ENCODE measurements at regions of chr5 and their contacts with region 1.

Region 1: DNA sequence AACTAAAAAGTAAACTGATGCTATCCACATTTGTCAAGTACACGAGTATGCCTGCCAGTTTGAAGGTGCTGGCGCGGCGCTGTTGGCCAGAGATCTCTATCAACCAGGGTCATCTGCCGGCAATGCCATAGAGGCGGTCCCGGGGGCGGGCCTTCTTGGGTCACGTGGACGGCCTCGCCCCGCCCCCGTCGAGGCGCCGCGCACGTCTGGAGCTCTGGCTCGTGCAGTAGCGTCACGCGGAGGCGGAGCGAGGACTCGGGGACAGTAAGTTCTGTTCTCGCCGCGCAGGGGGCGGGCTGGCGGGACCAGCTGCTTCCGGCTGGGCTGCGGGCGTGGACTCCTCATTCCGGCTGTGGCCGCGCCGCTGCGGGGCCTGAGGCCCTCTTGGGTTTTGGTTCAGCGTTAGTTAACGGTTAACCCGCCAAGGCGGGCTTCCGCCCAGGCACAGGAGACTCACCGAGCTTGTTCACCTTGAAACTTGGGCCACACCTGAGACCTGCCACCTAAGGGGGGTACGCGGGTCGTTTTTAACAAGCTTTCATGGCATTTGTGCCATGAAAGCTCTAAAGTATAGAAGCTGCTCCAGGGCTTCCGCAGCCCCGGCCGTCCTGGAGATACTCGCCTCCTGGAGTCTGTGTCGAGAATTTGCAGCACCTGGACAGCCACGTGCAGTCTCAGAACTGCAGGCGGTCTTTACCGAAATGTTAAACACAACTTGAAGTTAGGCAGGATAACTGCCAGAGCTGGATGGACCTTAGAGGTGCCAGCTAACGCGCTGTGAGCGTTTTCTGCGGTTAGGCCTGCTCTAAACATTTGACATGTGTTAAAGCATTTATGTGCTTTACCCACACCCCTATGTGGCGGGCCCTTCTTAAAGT is at the start of gene RFESD:
- DNase-seq: peak; percentile 97
- ATAC-seq: peak; percentile 96
- H3K4me3 Mint-ChIP-seq: peak within 1 kb of the TSS; percentile 86
- H3K27ac Mint-ChIP-seq: peak within 1 kb of the TSS; percentile 87
- H3K4me1 Mint-ChIP-seq: peaks cover 26% of the 10 kb centered on the region
- H3K27me3 Mint-ChIP-seq: no peaks in the 10 kb centered on the region
- CTCF ChIP-seq: no peak
- total RNA-seq, gene RFESD: 1.8 and 2.4 TPM in 2 replicates

Region 2: GRCh38 chr5:95631991-95632675 is 14.7 kb before region 1 on chr5:
- CTCF ChIA-PET with region 1: interaction called, 6 read pairs
- POLR2A ChIA-PET with region 1: interaction called, 18 read pairs
- intact Hi-C with region 1: loop called (anchors 1 kb)
- DNase-seq: no peak
- ATAC-seq: peak; percentile 97
- H3K4me3 Mint-ChIP-seq: peak overlapping the region; percentile 24
- H3K27ac Mint-ChIP-seq: peak overlapping the region; percentile 92
- H3K4me1 Mint-ChIP-seq: peaks cover 10% of the 10 kb centered on the region
- H3K27me3 Mint-ChIP-seq: peaks cover 1% of the 10 kb centered on the region
- CTCF ChIP-seq: no peak

Region 3: GRCh38 chr5:95760273-95761191 is 113.7 kb after region 1 on chr5:
- CTCF ChIA-PET with region 1: interaction called, 3 read pairs
- POLR2A ChIA-PET with region 1: interaction called, 10 read pairs
- intact Hi-C with region 1: loop called (anchors 1 kb)
- DNase-seq: no peak
- ATAC-seq: peak; percentile 82
- H3K4me3 Mint-ChIP-seq: peak overlapping the region; percentile 74
- H3K27ac Mint-ChIP-seq: peak overlapping the region; percentile 89
- H3K4me1 Mint-ChIP-seq: peaks cover 42% of the 10 kb centered on the region
- H3K27me3 Mint-ChIP-seq: no peaks in the 10 kb centered on the region
- CTCF ChIP-seq: no peak

Region 4: GRCh38 chr5:95770830-95771708 is 124.3 kb after region 1 on chr5:
- CTCF ChIA-PET with region 1: no interaction called
- POLR2A ChIA-PET with region 1: no interaction called
- intact Hi-C with region 1: no loop called
- DNase-seq: no peak
- ATAC-seq: no peak
- H3K4me3 Mint-ChIP-seq: no peak overlapping the region
- H3K27ac Mint-ChIP-seq: no peak overlapping the region
- H3K4me1 Mint-ChIP-seq: no peaks in the 10 kb centered on the region
- H3K27me3 Mint-ChIP-seq: no peaks in the 10 kb centered on the region
- CTCF ChIP-seq: no peak

Region 5: DNA sequence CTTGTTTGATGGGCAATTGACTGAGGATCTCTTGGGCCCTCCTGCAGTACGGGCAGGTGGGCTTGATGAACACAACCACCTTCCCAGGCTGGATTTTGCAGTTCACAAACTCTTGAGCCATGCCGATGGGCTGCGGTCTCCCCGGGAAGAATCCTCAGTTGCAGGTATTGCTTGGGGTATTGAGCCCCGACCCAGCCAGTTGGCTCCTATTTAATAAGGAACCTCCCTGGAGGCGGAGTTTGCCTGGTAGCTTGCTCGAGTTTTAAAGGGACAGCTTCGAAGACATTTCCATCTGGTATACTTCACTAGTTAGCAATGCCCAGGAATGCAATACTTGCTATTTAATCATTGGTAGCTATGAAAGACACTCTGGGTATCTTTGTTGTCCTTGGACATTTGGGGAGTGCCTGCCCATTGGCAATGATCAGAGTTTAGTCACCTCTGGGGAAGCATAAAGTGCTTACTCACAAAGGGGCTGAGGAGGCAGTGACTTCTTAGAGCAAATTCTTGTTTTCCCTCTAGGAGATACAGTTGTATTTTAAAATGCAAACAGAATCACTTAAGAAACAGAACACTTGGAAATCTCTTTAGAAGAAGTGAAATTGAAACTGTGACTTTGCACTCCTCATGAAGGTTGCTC is 175.9 kb after region 1 on chr5 and contains the start of gene GLRX:
- CTCF ChIA-PET with region 1: no interaction called
- POLR2A ChIA-PET with region 1: interaction called, 13 read pairs
- intact Hi-C with region 1: no loop called
- DNase-seq: no peak
- ATAC-seq: peak; percentile 30
- H3K4me3 Mint-ChIP-seq: peak within 1 kb of the TSS; percentile 95
- H3K27ac Mint-ChIP-seq: peak within 1 kb of the TSS; percentile 98
- H3K4me1 Mint-ChIP-seq: peaks cover 72% of the 10 kb centered on the region
- H3K27me3 Mint-ChIP-seq: no peaks in the 10 kb centered on the region
- CTCF ChIP-seq: no peak
- total RNA-seq, gene GLRX: 55.4 and 60.2 TPM in 2 replicates

Region 6: GRCh38 chr5:95961617-95962474 is 315.1 kb after region 1 on chr5 and contains the start of gene ELL2:
- CTCF ChIA-PET with region 1: no interaction called
- POLR2A ChIA-PET with region 1: interaction called, 7 read pairs
- intact Hi-C with region 1: loop called (anchors 1 kb)
- DNase-seq: peak; percentile 92
- ATAC-seq: peak; percentile 84
- H3K4me3 Mint-ChIP-seq: peak within 1 kb of the TSS; percentile 99
- H3K27ac Mint-ChIP-seq: peak within 1 kb of the TSS; percentile 97
- H3K4me1 Mint-ChIP-seq: peaks cover 48% of the 10 kb centered on the region
- H3K27me3 Mint-ChIP-seq: no peaks in the 10 kb centered on the region
- CTCF ChIP-seq: no peak
- total RNA-seq, gene ELL2: 52.9 and 56.0 TPM in 2 replicates

Region 7: DNA sequence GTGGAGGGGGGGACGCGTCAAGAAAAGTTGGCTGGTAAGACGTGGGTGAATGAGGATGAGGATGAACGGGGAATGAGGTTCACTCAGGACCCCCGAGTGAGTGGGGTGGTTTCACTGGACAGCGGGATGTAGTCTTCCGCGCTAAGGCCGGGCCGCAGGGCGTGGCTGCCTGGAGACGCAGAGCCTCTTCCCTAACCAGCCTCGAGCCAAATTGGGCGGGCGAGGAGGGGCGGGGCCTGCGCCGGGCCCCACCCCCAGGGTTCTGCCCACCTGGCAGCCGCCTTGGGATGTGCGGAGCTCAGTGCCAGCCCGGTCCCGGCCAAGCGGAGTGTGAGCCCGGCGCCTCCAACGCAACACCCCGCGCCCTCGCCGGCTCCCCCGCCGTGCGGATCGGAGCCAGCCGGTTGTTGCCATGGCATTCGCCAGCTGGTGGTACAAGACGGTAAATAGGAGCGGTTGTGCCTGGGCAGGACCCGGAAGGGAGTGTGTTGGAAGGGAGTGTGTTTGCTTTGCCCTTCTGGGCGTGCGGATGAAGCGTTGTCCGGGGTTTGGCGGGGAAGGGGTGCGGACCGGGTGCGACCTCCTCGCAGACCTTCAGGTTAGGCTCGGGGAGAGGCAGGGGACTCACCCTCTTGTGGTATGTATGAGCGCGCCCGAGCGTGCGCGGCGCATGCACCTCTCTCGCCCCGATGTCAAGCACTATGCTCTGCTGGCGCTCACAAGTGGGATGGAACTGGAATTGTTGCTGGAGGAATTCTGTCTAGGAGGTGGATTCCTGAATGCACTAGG is 1016.1 kb after region 1 on chr5:
- CTCF ChIA-PET with region 1: no interaction called
- POLR2A ChIA-PET with region 1: interaction called, 13 read pairs
- intact Hi-C with region 1: loop called (anchors 1 kb)
- DNase-seq: peak; percentile 89
- ATAC-seq: peak; percentile 72
- H3K4me3 Mint-ChIP-seq: peak overlapping the region; percentile 98
- H3K27ac Mint-ChIP-seq: peak overlapping the region; percentile 98
- H3K4me1 Mint-ChIP-seq: peaks cover 51% of the 10 kb centered on the region
- H3K27me3 Mint-ChIP-seq: no peaks in the 10 kb centered on the region
- CTCF ChIP-seq: no peak